Breast epithelium (tissue), 4 donors: ENCODE measurements at regions of chr13 and their contacts with region 1.

Region 1: DNA sequence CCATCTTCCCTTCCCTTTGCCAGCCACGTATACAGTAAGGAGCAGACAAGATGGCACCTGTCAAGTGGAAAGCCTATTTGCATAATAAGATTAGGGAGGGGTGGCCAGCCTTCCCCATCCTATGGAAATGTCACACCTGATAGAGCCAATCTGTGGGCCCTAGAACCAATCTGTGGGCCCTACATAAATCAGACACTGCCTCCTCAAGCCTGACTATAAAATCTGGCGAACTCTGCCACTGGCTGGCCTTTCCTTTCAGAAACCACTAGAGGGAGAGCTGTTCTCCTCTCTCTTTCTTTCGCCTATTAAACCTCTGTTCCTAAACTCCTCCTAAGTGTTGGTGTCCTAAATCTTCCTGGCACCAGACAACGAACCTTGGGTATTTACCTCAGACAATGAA is 231.5 kb upstream of the KLHL1 start:
- DNase-seq: no peak
- H3K4me3 ChIP-seq: no peak overlapping the region
- H3K27ac ChIP-seq: no peak overlapping the region
- H3K4me1 ChIP-seq: no peaks in the 10 kb centered on the region
- H3K27me3 ChIP-seq: peaks cover 0 to 3% of the 10 kb centered on the region in 2 donors
- CTCF ChIP-seq: no peak
- POLR2A ChIP-seq: no peak

Region 2: DNA sequence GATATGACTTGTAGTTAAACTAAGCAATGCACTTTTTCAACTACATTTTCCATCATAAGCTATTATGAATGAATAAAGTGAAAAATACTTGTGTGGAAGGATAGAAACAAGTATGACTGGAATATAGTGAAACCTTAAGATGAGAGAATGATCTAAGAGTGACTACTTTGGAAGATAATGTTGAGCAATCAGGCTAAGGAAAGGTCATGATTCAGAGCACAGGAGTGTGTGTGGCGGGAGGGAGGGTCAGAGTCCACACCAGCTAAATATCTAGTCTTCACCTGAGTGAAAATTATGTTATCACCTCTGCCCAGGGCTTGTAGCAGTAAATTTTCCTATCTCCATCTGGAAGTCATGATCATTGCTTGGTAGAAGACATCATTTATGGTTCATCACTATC is 1065.5 kb before region 1 on chr13:
- intact Hi-C with region 1: loop called (anchors 10 kb)
- DNase-seq: no peak
- H3K4me3 ChIP-seq: no peak overlapping the region
- H3K27ac ChIP-seq: no peak overlapping the region
- H3K4me1 ChIP-seq: no peaks in the 10 kb centered on the region
- H3K27me3 ChIP-seq: no peaks in the 10 kb centered on the region
- CTCF ChIP-seq: no peak
- POLR2A ChIP-seq: no peak

Region 3: DNA sequence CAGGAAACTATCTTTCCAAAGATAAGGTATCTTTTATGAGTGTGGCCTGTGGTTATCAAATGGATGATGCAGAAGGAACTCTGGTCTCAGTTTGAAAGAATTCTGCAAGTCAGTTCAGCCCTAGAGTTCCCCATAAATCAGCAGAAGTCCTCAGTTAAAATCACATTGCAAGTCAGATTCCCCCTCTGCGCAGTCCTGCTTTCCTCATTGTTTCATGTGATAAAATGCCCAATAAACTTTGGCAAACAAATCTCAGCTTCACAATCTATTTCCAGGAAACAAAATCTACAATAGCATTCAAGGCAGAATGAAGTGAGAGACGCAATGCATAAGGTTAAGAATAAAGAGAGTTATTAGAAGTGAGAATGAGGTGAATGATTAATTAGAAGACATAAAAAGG is 15.2 kb before region 1 on chr13:
- intact Hi-C with region 1: no loop called
- DNase-seq: no peak
- H3K4me3 ChIP-seq: no peak overlapping the region
- H3K27ac ChIP-seq: no peak overlapping the region
- H3K4me1 ChIP-seq: no peaks in the 10 kb centered on the region
- H3K27me3 ChIP-seq: no peaks in the 10 kb centered on the region
- CTCF ChIP-seq: no peak
- POLR2A ChIP-seq: no peak